ENCODE measurements at regions of chr13 and their contacts with region 1.

Region 1: GRCh38 chr13:52450012-52450792 is at the start of gene VPS36:
- DNase-seq: peak; percentile 83
- H3K4me3 ChIP-seq: peak within 1 kb of the TSS; percentile 87
- H3K27ac ChIP-seq: peak within 1 kb of the TSS; percentile 70
- H3K27me3 ChIP-seq: no peaks in the 10 kb centered on the region
- CTCF ChIP-seq: peak; percentile 88
- polyA plus RNA-seq, gene VPS36: 20.5 and 24.2 TPM in 2 replicates

Region 2: GRCh38 chr13:52173373-52173772 is 276.8 kb before region 1 on chr13:
- CTCF ChIA-PET with region 1: interaction called, 12 read pairs
- POLR2A ChIA-PET with region 1: no interaction called
- DNase-seq: no peak
- H3K4me3 ChIP-seq: no peak overlapping the region
- H3K27ac ChIP-seq: no peak overlapping the region
- H3K27me3 ChIP-seq: no peaks in the 10 kb centered on the region
- CTCF ChIP-seq: no peak

Region 3: GRCh38 chr13:52359534-52359933 is 90.7 kb before region 1 on chr13:
- CTCF ChIA-PET with region 1: interaction called, 35 read pairs
- POLR2A ChIA-PET with region 1: interaction called, 3 read pairs
- DNase-seq: no peak
- H3K4me3 ChIP-seq: no peak overlapping the region
- H3K27ac ChIP-seq: no peak overlapping the region
- H3K27me3 ChIP-seq: no peaks in the 10 kb centered on the region
- CTCF ChIP-seq: no peak

Region 4: DNA sequence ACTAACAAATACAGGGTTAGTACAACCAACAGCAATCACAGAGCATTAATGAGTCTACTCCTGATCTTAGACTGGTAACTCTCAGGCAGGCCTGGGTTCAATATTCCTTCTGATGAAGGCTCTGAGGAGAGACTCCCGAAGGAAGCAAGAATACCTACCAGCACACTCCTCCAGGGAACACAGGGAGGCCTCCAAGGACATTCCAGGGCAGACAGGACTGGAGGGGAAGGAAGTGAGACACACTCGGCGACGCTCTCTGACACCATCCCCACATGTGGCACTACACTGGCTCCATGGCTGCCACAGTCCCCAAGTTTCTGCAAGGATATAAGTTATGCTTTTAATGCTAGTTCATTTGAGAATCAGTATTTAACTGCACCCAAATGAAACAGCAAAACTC is 64.3 kb before region 1 on chr13:
- CTCF ChIA-PET with region 1: interaction called, 16 read pairs
- POLR2A ChIA-PET with region 1: no interaction called
- DNase-seq: no peak
- H3K4me3 ChIP-seq: no peak overlapping the region
- H3K27ac ChIP-seq: no peak overlapping the region
- H3K27me3 ChIP-seq: no peaks in the 10 kb centered on the region
- CTCF ChIP-seq: no peak

Region 5: GRCh38 chr13:52411629-52412028 is 38.6 kb before region 1 on chr13:
- CTCF ChIA-PET with region 1: interaction called, 40 read pairs
- POLR2A ChIA-PET with region 1: interaction called, 4 read pairs
- DNase-seq: peak; percentile 21
- H3K4me3 ChIP-seq: no peak overlapping the region
- H3K27ac ChIP-seq: no peak overlapping the region
- H3K27me3 ChIP-seq: no peaks in the 10 kb centered on the region
- CTCF ChIP-seq: no peak

Measured in AG04450 (cell line).